Caco-2 (cell line): ENCODE measurements at regions of chr5 and their contacts with region 1.

Region 1: DNA sequence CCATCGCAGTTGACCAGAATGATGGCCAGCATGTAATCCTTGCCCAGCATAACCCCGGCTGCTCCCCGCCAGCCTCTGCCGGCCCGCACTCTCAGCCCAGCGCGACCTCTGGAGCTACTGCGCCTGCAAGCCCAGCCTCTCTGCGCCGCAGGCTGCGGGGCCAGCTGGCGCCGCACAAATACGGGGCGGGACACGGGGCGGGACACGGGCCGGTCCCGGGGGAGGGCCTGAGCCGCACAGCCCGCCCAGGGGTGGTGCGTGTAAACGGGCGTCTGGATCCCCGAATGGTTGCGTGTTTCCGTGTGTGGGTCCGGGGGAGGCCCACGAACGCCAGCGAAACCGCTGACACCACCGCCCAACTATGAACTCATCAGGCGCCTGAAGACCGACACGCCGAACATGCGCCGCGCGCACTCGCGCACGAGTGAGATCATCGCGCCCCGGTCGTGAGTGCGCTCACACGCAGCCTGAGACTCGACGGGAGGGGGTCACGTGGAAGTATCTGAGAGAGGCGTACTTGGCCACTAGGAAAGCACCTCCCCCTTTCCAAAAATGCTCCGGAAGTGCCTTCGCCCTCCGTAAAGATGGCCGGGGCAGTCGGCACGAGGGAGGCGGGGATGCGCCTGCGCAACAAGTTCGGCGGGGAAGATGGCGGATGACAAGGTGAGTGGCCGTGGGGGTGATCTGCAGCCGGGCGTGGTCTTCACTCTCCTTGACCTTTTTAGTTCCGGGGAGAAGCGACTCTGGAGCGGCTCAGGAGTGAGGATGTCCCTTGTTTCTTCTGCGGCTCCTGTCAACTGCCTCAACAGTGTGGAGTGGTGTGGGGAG is at the starts of genes APBB3 and SLC35A4:
- DNase-seq: peak; percentile 96 to 98
- H3K4me3 ChIP-seq: peak within 1 kb of the TSS; percentile 68
- H3K4me3 Mint-ChIP-seq: peak within 1 kb of the TSS; percentile 84
- H3K27ac Mint-ChIP-seq: peak within 1 kb of the TSS; percentile 93
- H3K4me1 ChIP-seq: peaks cover 7% of the 10 kb centered on the region; the same call in 1 of the 2 replicates
- H3K4me1 Mint-ChIP-seq: peaks cover 6% of the 10 kb centered on the region
- H3K27me3 ChIP-seq: no peaks in the 10 kb centered on the region
- H3K27me3 Mint-ChIP-seq: no peaks in the 10 kb centered on the region
- CTCF ChIP-seq: no peak
- total RNA-seq, gene APBB3: 23.4 and 25.1 TPM in 2 replicates
- total RNA-seq, gene SLC35A4: 79.5 and 91.3 TPM in 2 replicates

Region 2: DNA sequence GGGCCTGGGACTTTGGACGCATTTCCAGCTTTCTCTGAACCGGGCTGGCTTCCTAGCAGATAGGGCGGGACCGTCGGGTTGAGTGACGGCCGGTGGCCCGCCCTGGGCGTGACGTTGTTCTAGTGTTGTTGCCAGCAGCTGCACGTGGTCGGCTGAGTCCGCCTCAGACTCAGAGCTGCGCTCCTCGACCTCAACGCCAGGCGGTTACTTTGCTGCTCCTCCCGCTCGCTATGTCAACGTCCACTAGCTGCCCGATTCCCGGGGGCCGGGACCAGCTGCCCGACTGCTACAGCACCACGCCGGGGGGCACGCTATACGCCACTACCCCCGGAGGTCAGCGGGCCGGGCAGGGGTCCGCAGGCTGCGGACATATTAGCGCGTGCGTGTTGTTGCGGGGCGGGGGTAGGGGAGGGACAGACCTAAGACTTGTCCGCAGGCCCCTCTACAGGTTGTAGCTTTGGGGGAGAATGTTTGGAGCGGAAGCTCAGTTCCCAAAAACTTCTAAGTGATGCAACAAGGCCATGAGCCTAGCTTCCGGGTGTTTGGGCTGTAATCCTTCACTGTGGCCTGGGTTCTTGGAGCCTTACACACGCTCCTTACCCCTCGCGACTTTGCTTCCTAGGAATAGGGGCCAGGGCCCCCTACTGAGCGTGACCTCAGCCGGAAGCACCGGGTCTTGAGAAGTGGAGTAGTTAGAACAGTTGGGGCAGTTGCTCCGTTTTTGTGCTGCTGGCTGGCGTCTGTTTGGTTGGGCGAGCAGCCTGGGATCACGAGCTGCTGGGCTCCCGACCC is 16.7 kb before region 1 on chr5 and contains the start of gene EIF4EBP3:
- CTCF ChIA-PET with region 1: interaction called, 3 read pairs
- POLR2A ChIA-PET with region 1: interaction called, 14 read pairs
- intact Hi-C with region 1: loop called (anchors 1 kb)
- DNase-seq: peak; percentile 97
- H3K4me3 ChIP-seq: peak within 1 kb of the TSS; percentile 38
- H3K4me3 Mint-ChIP-seq: peak within 1 kb of the TSS; percentile 69
- H3K27ac Mint-ChIP-seq: peak within 1 kb of the TSS; percentile 88
- H3K4me1 ChIP-seq: peaks cover 13% of the 10 kb centered on the region
- H3K4me1 Mint-ChIP-seq: peaks cover 19% of the 10 kb centered on the region
- H3K27me3 ChIP-seq: no peaks in the 10 kb centered on the region
- H3K27me3 Mint-ChIP-seq: no peaks in the 10 kb centered on the region
- CTCF ChIP-seq: peak; percentile 37 to 48
- total RNA-seq, gene EIF4EBP3: 7.6 and 8.0 TPM in 2 replicates

Region 3: DNA sequence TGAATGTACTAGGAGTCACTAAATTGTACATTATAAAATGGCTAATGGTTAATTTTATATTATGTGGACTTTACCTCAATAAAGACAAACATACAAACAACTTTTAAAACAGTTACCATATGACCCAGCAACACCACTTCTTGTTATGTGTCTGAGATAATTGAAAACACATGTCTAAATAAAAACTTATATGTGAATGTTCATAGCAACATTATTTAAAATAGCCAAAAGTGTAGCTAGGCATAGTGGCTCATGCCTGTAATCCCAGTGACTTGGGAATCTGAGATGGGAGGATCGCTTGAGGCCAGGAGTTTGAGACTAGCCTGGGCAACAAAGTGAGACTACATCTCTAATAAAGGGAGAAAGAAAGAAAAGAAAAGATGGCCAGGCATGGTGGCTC is 23.1 kb after region 1 on chr5:
- CTCF ChIA-PET with region 1: no interaction called
- POLR2A ChIA-PET with region 1: interaction called, 10 read pairs
- intact Hi-C with region 1: no loop called
- DNase-seq: no peak
- H3K4me3 ChIP-seq: no peak overlapping the region
- H3K4me3 Mint-ChIP-seq: no peak overlapping the region
- H3K27ac Mint-ChIP-seq: no peak overlapping the region
- H3K4me1 ChIP-seq: no peaks in the 10 kb centered on the region
- H3K4me1 Mint-ChIP-seq: no peaks in the 10 kb centered on the region
- H3K27me3 ChIP-seq: no peaks in the 10 kb centered on the region
- H3K27me3 Mint-ChIP-seq: no peaks in the 10 kb centered on the region
- CTCF ChIP-seq: no peak

Region 4: DNA sequence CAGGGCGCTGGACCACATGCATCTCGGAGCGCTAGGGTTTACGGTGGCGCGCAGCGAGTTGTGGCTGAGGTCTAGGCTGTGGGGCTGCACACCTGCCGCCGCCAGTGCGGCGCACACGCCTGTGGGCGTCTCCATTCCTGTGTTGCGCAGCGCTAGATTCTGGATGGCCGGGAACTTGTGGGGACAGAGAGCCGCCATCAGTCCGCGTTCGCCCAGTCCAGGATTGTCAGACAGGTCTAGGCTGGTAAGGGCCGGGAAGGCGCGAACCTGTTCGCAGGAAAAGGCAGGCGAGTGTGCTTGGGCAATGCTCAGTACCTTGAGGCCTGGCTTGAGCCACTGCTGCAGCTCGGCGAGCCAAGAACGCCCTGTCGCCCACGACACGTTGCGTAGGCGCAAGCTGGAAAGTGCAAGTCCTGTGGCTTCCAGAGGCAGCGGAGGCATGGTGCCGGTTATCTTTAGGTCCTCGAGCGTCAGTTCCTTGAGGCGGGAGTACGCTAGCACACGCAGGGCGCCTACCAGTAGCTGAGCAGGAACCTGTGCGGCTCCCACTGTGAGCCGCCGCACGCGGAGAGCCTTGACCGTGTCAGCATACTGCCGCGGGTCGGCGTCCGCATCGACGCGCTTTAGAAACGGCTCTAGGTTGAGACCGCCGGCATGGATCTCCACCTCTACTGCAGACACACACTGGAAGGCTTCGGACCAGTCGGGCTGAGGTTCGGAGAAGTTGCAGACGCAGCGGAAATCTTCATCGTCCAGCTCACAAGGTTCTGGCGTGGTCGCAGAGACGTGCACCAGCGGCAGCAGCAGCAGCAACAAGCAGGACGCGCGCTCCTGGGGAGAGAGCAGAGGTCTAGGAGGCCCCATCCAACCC is 68.0 kb after region 1 on chr5:
- CTCF ChIA-PET with region 1: no interaction called
- POLR2A ChIA-PET with region 1: no interaction called
- intact Hi-C with region 1: loop called (anchors 1 kb)
- DNase-seq: peak; percentile 58 to 59
- H3K4me3 ChIP-seq: peak overlapping the region; percentile 49
- H3K4me3 Mint-ChIP-seq: peak overlapping the region; percentile 88
- H3K27ac Mint-ChIP-seq: peak overlapping the region; percentile 79
- H3K4me1 ChIP-seq: peaks cover 11% of the 10 kb centered on the region
- H3K4me1 Mint-ChIP-seq: peaks cover 7% of the 10 kb centered on the region
- H3K27me3 ChIP-seq: no peaks in the 10 kb centered on the region
- H3K27me3 Mint-ChIP-seq: no peaks in the 10 kb centered on the region
- CTCF ChIP-seq: no peak

Region 5: GRCh38 chr5:140710899-140711552 is 146.6 kb after region 1 on chr5:
- CTCF ChIA-PET with region 1: no interaction called
- POLR2A ChIA-PET with region 1: interaction called, 6 read pairs
- intact Hi-C with region 1: loop called (anchors 5 kb)
- DNase-seq: peak; percentile 96 to 97
- H3K4me3 ChIP-seq: peak overlapping the region; percentile 46
- H3K4me3 Mint-ChIP-seq: peak overlapping the region; percentile 93
- H3K27ac Mint-ChIP-seq: peak overlapping the region; percentile 98
- H3K4me1 ChIP-seq: no peaks in the 10 kb centered on the region
- H3K4me1 Mint-ChIP-seq: peaks cover 7% of the 10 kb centered on the region
- H3K27me3 ChIP-seq: no peaks in the 10 kb centered on the region
- H3K27me3 Mint-ChIP-seq: peaks cover 4% of the 10 kb centered on the region
- CTCF ChIP-seq: no peak